H1 (cell line): ENCODE measurements at regions of chr7 and their contacts with region 1.

Region 1: GRCh38 chr7:4136501-4137110 is 545.5 kb upstream of the FOXK1 start:
- DNase-seq: no peak
- H3K4me3 ChIP-seq: no peak overlapping the region
- H3K27ac ChIP-seq: no peak overlapping the region
- H3K4me1 ChIP-seq: peaks cover 0 to 29% (median 10%) of the 10 kb centered on the region in 4 experiments; a peak in 6 of 7 replicates
- H3K27me3 ChIP-seq: no peaks in the 10 kb centered on the region
- CTCF ChIP-seq: peak in 2 of 3 experiments; percentile 21 to 49; a peak in 2 of 4 replicates
- EP300 ChIP-seq: no peak
- POLR2A ChIP-seq: no peak
- RAD21 ChIP-seq: peak in 1 of 2 experiments; percentile 36; a peak in 2 of 4 replicates

Region 2: DNA sequence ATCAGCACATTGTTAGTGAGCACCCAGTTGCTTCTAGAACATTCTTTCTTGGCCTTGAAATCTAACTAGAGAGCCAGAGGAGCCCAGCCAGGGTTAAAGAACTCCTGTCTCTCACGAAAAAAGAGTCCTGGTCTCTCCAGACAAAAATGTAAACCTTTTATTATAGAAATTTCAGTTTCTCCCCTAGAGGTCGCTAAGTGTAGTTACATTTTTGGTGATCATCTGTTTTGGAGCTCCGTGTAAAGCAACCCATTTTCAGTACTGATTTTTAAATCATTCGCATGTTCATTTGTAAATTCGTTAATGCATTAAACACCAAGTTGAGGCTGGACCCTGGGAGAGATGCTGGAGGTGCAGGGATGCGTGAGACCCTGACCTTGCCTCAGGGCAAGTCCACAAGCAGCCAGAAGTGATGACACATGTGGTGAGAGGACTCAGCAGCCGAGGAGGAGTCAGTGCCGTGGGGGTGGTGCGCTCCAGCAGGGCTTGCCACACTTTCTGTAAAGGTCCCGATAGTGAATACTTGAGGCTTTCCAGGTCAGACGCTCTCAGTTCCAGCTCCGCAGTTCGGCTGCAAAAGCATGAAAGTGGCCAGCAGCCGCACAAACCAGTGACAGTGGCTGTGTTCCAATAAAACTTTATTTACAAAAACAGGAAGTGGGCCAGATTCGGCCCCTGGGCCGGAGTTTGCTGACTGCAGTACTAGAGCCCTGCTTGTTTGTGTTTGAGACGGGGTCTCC is 33.1 kb before region 1 on chr7:
- CTCF ChIA-PET with region 1: interaction called, 11 read pairs
- POLR2A ChIA-PET with region 1: interaction called, 3 read pairs
- DNase-seq: peak in 1 of 2 experiments; percentile 58
- H3K4me3 ChIP-seq: no peak overlapping the region
- H3K27ac ChIP-seq: no peak overlapping the region
- H3K4me1 ChIP-seq: peaks cover 0 to 4% (median 0%) of the 10 kb centered on the region in 4 experiments; a peak in 1 of 7 replicates
- H3K27me3 ChIP-seq: no peaks in the 10 kb centered on the region
- CTCF ChIP-seq: no peak; a peak in 1 of 4 replicates
- EP300 ChIP-seq: no peak
- POLR2A ChIP-seq: no peak
- RAD21 ChIP-seq: peak in 1 of 2 experiments; percentile 10; a peak in 1 of 4 replicates